MCF 10A (cell line): ENCODE measurements at regions of chr17 and their contacts with region 1.

Region 1: DNA sequence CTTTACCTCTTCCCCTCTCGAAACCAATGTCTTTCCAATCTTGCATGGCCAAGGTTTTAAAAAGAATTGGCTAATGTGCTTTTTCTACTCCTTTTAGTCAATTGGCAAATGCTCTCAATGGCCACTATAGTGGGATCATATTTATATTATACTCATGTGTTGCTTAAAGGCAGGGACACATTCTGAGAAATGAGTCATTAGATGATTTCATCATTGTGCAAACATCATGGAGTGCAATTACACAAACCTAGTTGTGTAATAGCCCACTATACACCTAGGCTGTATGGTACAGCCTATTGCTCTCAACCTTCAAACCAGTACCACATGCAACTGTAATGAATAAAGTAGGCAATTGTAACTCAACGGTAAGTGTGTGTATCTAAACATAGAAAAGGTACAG is 180.9 kb downstream of the HS3ST3A1 start:
- DNase-seq: peak; percentile 95
- H3K4me3 Mint-ChIP-seq: no peak overlapping the region
- H3K27ac Mint-ChIP-seq: peak overlapping the region; percentile 79
- H3K4me1 Mint-ChIP-seq: peaks cover 43% of the 10 kb centered on the region
- H3K27me3 Mint-ChIP-seq: no peaks in the 10 kb centered on the region
- CTCF ChIP-seq: no peak

Region 2: GRCh38 chr17:13182462-13183253 is 238.2 kb before region 1 on chr17:
- CTCF ChIA-PET with region 1: no interaction called
- POLR2A ChIA-PET with region 1: no interaction called
- intact Hi-C with region 1: no loop called
- DNase-seq: no peak
- H3K4me3 Mint-ChIP-seq: no peak overlapping the region
- H3K27ac Mint-ChIP-seq: no peak overlapping the region
- H3K4me1 Mint-ChIP-seq: no peaks in the 10 kb centered on the region
- H3K27me3 Mint-ChIP-seq: peaks cover 66% of the 10 kb centered on the region
- CTCF ChIP-seq: no peak

Region 3: GRCh38 chr17:13393841-13394710 is 26.8 kb before region 1 on chr17:
- CTCF ChIA-PET with region 1: interaction called, 3 read pairs
- POLR2A ChIA-PET with region 1: interaction called, 12 read pairs
- intact Hi-C with region 1: no loop called
- DNase-seq: peak; percentile 95
- H3K4me3 Mint-ChIP-seq: no peak overlapping the region
- H3K27ac Mint-ChIP-seq: peak overlapping the region; percentile 65
- H3K4me1 Mint-ChIP-seq: peaks cover 27% of the 10 kb centered on the region
- H3K27me3 Mint-ChIP-seq: no peaks in the 10 kb centered on the region
- CTCF ChIP-seq: no peak

Region 4: DNA sequence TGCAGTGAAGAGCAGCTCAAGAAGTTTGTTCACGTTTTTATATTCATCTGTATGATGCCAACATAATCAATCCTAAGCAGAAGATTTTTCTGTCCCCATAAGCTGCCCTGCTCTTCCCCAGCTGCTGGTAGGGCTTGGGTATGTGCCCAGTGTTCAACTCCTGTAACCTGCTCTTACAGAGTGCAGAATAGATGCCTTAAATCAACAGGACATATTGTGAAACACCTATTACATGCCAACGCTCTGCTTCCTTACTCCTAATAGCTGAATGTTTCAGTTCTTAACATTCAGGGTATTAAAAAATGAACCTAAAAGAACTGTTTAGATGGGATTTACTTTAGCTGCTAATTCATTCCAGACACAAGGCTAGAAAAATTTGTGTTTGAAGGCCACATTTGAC is 10.0 kb before region 1 on chr17:
- CTCF ChIA-PET with region 1: no interaction called
- POLR2A ChIA-PET with region 1: interaction called, 13 read pairs
- intact Hi-C with region 1: no loop called
- DNase-seq: peak; percentile 82
- H3K4me3 Mint-ChIP-seq: peak overlapping the region; percentile 31
- H3K27ac Mint-ChIP-seq: peak overlapping the region; percentile 83
- H3K4me1 Mint-ChIP-seq: peaks cover 27% of the 10 kb centered on the region
- H3K27me3 Mint-ChIP-seq: no peaks in the 10 kb centered on the region
- CTCF ChIP-seq: no peak

Region 5: GRCh38 chr17:13520899-13521572 is 100.2 kb after region 1 on chr17:
- CTCF ChIA-PET with region 1: no interaction called
- POLR2A ChIA-PET with region 1: no interaction called
- intact Hi-C with region 1: no loop called
- DNase-seq: peak; percentile 13
- H3K4me3 Mint-ChIP-seq: no peak overlapping the region
- H3K27ac Mint-ChIP-seq: no peak overlapping the region
- H3K4me1 Mint-ChIP-seq: no peaks in the 10 kb centered on the region
- H3K27me3 Mint-ChIP-seq: no peaks in the 10 kb centered on the region
- CTCF ChIP-seq: no peak

Region 6: GRCh38 chr17:13584701-13585080 is 163.8 kb after region 1 on chr17:
- CTCF ChIA-PET with region 1: no interaction called
- POLR2A ChIA-PET with region 1: no interaction called
- intact Hi-C with region 1: loop called (anchors 5 kb)
- DNase-seq: no peak
- H3K4me3 Mint-ChIP-seq: no peak overlapping the region
- H3K27ac Mint-ChIP-seq: peak overlapping the region; percentile 84
- H3K4me1 Mint-ChIP-seq: peaks cover 40% of the 10 kb centered on the region
- H3K27me3 Mint-ChIP-seq: no peaks in the 10 kb centered on the region
- CTCF ChIP-seq: no peak